CD14-positive monocyte (primary cell): ENCODE measurements at regions of chr11 and their contacts with region 1.

Region 1: DNA sequence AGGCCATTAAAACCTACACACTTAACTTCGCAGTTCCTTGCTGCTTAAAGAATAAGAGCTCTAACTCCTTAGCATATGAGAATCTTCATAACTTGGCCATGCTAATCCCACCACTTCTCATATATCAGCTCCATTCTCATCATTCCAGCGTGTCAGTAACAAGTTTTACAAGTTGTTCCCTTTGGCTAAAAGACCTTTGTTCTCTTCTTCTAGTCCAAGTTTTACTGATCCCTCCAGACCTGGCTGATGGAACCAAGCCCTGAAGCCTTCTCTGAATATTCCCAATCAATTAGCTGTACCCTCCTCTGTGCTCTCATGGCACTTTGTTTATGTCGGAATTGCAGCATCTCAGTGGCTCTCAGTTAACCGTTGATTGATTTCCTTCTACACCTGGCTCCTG is 35.8 kb downstream of the GAB2 start:
- DNase-seq: no peak
- H3K4me3 ChIP-seq: no peak overlapping the region
- H3K4me3 Mint-ChIP-seq: no peak overlapping the region
- H3K27ac ChIP-seq: no peak overlapping the region
- H3K27ac Mint-ChIP-seq: peak overlapping the region in 4 of 7 donors; percentile 17 to 75 (median 48)
- H3K4me1 ChIP-seq: peaks cover 17 to 29% of the 10 kb centered on the region in 2 donors
- H3K4me1 Mint-ChIP-seq: peaks cover 45% of the 10 kb centered on the region
- H3K27me3 ChIP-seq: no peaks in the 10 kb centered on the region
- H3K27me3 Mint-ChIP-seq: no peaks in the 10 kb centered on the region
- CTCF ChIP-seq: no peak

Region 2: DNA sequence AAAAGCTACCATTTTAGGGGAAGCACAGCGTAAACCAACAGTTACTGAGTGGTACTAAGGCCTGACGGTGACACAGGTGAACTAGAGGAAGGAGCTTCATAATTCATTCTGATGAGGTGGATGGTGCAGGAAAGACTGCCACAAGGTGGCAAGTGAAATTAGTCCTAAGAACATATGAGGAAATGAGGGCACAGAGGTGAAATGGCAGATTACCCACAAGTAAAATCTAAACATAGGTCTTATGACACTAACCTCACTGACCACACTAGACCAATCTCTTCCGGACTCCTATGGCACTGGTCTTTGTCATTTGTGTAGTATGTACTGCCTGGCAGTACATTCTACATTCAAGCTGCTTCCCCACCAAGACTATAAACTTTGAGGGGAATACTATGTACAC is 15.5 kb after region 1 on chr11:
- intact Hi-C with region 1: loop called in 1 of 2 experiments (anchors 1 kb)
- DNase-seq: peak; percentile 48 to 56 (median 53)
- H3K4me3 ChIP-seq: peak overlapping the region in 1 of 3 experiments; percentile 15
- H3K4me3 Mint-ChIP-seq: peak overlapping the region in 1 of 2 donors; percentile 23
- H3K27ac ChIP-seq: peak overlapping the region in 1 of 2 donors; percentile 45
- H3K27ac Mint-ChIP-seq: peak overlapping the region in 6 of 7 donors; percentile 51 to 79 (median 72)
- H3K4me1 ChIP-seq: peaks cover 19 to 29% of the 10 kb centered on the region in 2 donors
- H3K4me1 Mint-ChIP-seq: peaks cover 60% of the 10 kb centered on the region
- H3K27me3 ChIP-seq: no peaks in the 10 kb centered on the region
- H3K27me3 Mint-ChIP-seq: no peaks in the 10 kb centered on the region
- CTCF ChIP-seq: no peak

Region 3: GRCh38 chr11:78416305-78417178 is 34.7 kb after region 1 on chr11:
- intact Hi-C with region 1: no loop called
- DNase-seq: peak; percentile 91 to 95 (median 95)
- H3K4me3 ChIP-seq: peak overlapping the region; percentile 47 to 94 (median 84)
- H3K4me3 Mint-ChIP-seq: peak overlapping the region; percentile 95 to 96
- H3K27ac ChIP-seq: peak overlapping the region; percentile 98 to 100
- H3K27ac Mint-ChIP-seq: peak overlapping the region; percentile 98 to 100 (median 99)
- H3K4me1 ChIP-seq: peaks cover 70 to 80% of the 10 kb centered on the region in 2 donors
- H3K4me1 Mint-ChIP-seq: peaks cover 74% of the 10 kb centered on the region
- H3K27me3 ChIP-seq: no peaks in the 10 kb centered on the region
- H3K27me3 Mint-ChIP-seq: peaks cover 0 to 8% (median 0%) of the 10 kb centered on the region in 3 donors
- CTCF ChIP-seq: peak; percentile 59

Region 4: DNA sequence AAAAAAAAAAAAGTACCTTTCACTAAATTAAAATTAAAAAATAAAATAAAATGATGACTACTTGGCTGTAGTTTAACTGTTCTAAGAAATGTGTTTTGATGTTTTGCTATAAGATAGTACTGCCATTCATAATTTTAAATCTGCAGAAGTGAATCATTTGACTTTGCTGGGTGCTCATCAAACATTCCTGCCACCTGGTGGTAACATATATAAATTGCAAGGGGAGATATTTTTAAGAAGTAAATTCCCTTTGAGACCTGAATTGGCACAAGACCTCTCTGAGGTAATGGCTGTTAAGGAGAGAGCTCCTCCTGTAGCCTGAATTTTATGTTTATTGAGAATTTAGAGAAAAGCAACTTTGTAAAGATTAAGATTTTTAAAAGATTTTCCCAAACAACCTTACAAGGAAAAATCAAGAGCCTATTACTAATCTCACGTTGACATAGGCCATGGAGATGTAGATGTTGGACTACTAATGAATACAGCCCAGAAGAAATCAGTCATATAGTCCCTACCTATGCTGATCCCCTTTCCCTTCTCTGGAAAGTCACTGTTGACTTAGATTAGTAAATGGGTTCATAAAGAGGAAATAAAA is 204.7 kb after region 1 on chr11:
- intact Hi-C with region 1: no loop called
- DNase-seq: peak; percentile 27 to 49 (median 45)
- H3K4me3 ChIP-seq: no peak overlapping the region
- H3K4me3 Mint-ChIP-seq: no peak overlapping the region
- H3K27ac ChIP-seq: no peak overlapping the region
- H3K27ac Mint-ChIP-seq: no peak overlapping the region
- H3K4me1 ChIP-seq: no peaks in the 10 kb centered on the region
- H3K4me1 Mint-ChIP-seq: no peaks in the 10 kb centered on the region
- H3K27me3 ChIP-seq: peaks cover 0 to 2% of the 10 kb centered on the region in 2 donors
- H3K27me3 Mint-ChIP-seq: peaks cover 3 to 4% (median 3%) of the 10 kb centered on the region in 3 donors
- CTCF ChIP-seq: peak; percentile 80